ENCODE measurements at regions of chr13 and their contacts with region 1.

Region 1: DNA sequence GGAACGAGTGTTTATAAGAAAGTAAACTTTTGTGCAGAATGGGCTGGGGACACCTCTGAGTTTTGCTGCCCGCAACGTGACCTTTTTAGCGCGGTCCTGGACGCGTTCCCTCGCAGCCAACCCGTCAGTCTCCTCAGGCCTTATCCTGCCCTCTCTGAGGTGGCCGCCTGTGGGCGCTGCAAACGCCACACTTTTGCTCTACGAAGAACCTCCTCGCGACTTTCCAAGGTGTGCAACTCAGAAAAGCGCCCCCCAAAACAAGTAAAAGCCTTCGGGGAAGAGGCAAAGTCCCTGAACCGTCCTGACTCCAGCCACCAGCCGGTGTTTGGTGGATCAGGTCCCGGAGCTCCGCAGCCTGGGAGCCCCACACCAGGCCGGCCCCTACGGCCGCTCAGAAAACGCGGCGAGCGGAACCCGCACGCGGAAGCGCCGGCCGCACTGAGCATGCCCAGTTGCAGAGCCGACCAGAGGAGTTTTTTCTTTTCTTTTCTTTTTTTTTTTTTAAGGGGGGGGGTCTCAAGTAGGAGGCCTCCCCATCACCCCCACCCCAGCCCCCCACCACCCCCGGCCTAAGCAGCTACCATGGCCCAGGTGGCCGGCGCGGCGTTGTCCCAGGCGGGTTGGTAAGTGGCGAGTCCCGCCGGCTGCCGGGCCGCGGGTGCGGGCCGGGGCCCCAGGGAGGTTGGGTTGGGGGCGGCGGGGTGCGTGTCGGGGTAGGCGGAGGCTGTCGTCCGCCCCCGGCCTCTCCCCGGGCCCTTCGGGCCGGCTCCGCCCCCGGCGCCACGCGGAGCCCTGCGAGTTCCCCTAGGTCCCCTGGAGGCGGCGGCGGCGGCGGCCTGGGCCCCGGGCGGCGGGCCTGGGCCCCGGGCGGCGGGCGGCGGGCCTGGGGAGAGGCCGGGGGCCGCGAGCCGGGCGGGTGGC is at the start of gene TDRD3:
- DNase-seq: peak; percentile 87
- H3K4me3 Mint-ChIP-seq: peak within 1 kb of the TSS; percentile 80
- H3K27ac Mint-ChIP-seq: peak within 1 kb of the TSS; percentile 88
- H3K4me1 Mint-ChIP-seq: peaks cover 18% of the 10 kb centered on the region
- H3K27me3 Mint-ChIP-seq: no peaks in the 10 kb centered on the region
- CTCF ChIP-seq: peak; percentile 51
- total RNA-seq, gene TDRD3: 13.6 and 21.4 TPM in 2 replicates

Region 2: DNA sequence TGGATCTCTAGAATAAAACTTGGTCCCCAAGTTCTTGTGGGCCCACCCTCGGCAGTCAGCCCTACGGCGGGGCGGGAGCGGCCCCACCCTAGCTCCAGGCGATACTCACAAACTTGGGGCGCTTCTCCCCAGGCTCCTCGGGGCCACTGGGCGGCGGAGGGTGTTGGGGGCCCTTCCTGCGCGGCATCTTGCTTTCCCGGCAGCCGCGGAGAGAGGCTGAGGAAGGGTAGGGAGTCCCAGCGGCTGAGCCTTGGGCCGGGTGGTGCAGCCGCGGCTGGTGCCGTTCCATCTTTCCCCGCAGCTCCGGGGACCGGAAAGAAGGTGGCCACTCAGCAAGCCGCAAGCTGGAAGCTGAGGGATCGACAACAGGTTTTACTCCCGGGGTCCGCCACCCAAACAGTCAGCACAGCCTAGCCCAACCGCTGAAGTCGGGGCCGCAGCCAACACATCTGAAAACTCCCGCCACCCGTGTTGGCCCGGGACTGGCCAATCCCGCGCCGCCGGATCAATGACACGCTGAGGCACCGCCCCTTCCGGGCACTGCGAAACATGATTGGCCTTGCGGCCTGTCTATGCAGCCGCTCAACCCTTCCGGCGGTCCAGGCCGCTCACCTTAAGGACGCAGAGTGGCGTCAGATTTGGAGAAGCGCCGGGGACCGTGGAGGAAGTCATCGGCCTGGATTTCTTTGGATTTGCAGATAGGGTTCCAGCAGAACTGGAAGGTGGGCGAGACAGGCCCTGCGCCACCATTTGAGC is 233.4 kb before region 1 on chr13 and contains the start of gene DIAPH3:
- CTCF ChIA-PET with region 1: interaction called, 3 read pairs
- POLR2A ChIA-PET with region 1: interaction called, 12 read pairs
- intact Hi-C with region 1: loop called (anchors 10 kb)
- DNase-seq: peak; percentile 96
- H3K4me3 Mint-ChIP-seq: peak within 1 kb of the TSS; percentile 94
- H3K27ac Mint-ChIP-seq: peak within 1 kb of the TSS; percentile 77
- H3K4me1 Mint-ChIP-seq: peaks cover 39% of the 10 kb centered on the region
- H3K27me3 Mint-ChIP-seq: no peaks in the 10 kb centered on the region
- CTCF ChIP-seq: no peak
- total RNA-seq, gene DIAPH3: 21.2 and 34.7 TPM in 2 replicates

Region 3: DNA sequence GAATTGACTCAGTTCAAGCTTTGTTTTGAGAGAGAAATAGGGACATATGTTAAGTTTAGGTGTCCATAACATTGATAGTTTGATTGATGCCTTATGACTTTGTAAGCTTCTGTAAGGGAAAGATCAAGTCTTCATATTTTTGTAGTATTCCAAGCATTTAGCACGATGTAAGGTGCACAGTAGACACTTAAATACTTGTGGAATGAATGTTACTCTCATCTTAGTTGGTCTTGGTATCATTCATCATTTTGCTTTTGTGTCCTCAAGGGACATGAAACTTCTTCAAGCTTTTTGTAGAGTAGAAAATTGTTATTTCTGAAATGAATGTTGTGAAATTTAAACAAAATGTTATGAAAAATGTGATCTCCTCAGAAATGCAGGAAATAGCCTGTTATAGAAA is 10.1 kb after region 1 on chr13:
- CTCF ChIA-PET with region 1: interaction called, 6 read pairs
- POLR2A ChIA-PET with region 1: interaction called, 15 read pairs
- intact Hi-C with region 1: no loop called
- DNase-seq: no peak
- H3K4me3 Mint-ChIP-seq: no peak overlapping the region
- H3K27ac Mint-ChIP-seq: no peak overlapping the region
- H3K4me1 Mint-ChIP-seq: no peaks in the 10 kb centered on the region
- H3K27me3 Mint-ChIP-seq: no peaks in the 10 kb centered on the region
- CTCF ChIP-seq: no peak

Region 4: DNA sequence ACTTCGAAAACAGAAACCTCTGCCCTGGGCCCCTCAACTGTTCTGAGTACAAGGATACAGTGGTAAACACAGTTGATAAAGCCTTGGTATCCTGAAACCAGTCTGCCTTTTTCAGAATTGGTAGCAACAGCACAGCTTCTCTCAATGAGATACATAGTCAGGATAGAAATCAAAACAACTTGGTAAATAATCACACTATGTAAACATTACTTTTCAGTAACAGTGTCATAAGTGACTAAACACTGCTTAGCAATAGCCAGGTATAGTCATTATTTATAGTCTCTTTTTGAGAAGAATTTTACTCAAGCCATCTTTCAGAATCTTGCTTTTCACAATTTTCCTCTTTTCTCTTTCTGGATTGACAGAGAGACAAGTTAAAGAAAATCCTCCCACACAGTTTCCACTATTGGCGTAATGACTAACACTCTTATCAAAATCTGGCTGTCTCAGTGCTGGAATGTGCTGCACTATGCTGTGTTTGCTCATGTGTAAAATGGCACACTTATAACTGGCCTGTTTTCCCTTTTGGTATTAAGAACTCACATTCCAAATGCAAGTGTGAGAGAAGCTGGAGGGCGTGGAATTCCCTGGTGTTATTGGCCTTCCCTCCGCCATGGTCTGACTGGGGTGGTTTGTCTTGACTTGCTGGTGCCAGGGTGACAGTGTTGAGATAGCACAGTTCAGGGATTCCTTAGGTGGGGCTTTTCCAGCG is 368.8 kb after region 1 on chr13:
- CTCF ChIA-PET with region 1: no interaction called
- POLR2A ChIA-PET with region 1: no interaction called
- intact Hi-C with region 1: no loop called
- DNase-seq: no peak
- H3K4me3 Mint-ChIP-seq: no peak overlapping the region
- H3K27ac Mint-ChIP-seq: no peak overlapping the region
- H3K4me1 Mint-ChIP-seq: no peaks in the 10 kb centered on the region
- H3K27me3 Mint-ChIP-seq: no peaks in the 10 kb centered on the region
- CTCF ChIP-seq: no peak